HEK293 (cell line): ENCODE measurements at regions of chr6 and their contacts with region 1.

Region 1: GRCh38 chr6:44257025-44257752 is at the start of gene SLC35B2:
- H3K4me3 ChIP-seq: peak within 1 kb of the TSS; percentile 82
- H3K27ac ChIP-seq: peak within 1 kb of the TSS; percentile 65; the same call in 1 of the 2 replicates
- H3K4me1 ChIP-seq: no peaks in the 10 kb centered on the region
- CTCF ChIP-seq: 0 out of 2 replicates have a peak, but pooled peaks have one; percentile 32

Region 2: DNA sequence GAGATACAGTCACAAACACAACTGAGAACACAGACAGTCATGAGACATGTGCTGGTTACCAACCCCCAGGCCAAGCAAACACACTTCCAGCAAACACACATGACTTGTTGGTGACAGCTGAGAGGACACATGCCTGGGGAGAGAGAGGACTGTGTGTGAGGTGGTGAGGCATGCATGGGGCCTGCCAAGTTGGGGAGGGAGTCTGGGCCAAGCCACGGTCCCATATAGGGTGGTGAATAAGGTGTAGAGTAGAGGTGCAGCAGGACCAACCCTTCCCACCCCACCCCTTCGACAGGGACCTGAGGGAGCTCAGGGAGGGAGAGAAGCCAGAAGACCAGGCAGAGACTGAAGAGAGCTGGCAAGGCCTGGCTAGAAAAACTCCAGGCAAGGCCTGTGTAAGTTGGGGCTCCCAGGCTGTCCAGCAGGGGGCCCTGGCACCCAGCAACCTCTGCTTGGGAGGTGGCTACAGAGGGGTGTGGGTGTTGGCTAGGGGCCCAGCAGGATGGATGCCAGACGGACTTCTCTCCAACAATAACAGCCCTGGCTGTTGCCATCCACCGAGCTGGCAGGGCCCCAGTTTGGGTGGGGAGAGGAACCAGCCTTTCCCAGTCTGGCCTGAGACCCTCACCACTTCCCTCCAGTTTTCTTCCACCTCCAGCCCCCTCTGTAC is 35.8 kb before region 1 on chr6:
- CTCF ChIA-PET with region 1: interaction called, 17 read pairs
- POLR2A ChIA-PET with region 1: interaction called, 13 read pairs
- H3K4me3 ChIP-seq: no peak overlapping the region
- H3K27ac ChIP-seq: peak overlapping the region; percentile 60
- H3K4me1 ChIP-seq: peaks cover 23% of the 10 kb centered on the region
- CTCF ChIP-seq: peak; percentile 92